ENCODE measurements at regions of chr22 and their contacts with region 1.

Region 1: DNA sequence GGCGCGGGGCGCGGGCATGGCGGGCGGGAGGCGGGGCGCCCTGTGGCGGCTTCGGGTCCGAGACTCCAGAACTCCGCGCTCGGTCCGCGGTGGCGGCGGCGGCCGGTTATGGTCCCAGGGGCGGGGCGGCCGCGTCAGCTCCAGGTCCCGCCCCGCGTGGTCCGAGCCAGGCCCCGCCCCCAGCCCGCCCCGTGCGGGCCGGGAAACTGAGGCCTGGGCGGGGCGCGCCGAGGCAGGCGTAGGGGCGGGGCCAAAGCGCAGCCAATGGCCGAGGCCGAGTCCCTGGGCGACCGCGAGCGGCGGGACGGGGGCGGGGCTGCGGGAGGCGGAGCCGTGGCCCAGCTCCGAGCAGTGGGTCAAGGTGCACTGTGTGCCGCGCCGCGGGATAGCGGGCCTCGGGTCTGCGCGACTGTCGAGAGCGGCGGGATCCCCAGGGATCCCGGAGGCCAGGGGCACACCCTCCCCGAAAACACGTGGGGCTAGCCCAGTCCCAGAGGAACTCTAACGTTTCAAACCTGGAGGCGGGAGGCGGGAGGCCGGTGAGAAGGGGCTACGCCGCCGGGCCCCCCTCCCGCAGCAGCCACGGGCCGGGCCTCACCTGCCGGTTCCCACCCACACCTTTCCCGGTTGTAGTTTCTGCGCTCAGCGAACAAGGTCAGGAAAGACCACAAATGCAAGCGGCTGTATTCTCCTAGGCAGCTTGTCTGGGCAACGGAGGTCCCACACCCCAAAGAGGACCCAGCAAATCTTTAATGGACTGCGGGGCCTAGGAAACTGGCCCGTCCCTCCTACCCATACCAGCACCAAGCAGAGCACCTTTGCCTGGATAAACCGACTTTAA is at the start of gene SLC25A1:
- DNase-seq: peak; percentile 97
- H3K4me3 Mint-ChIP-seq: peak within 1 kb of the TSS; percentile 83
- H3K27ac Mint-ChIP-seq: peak within 1 kb of the TSS; percentile 70
- H3K4me1 Mint-ChIP-seq: peaks cover 23% of the 10 kb centered on the region
- H3K27me3 Mint-ChIP-seq: no peaks in the 10 kb centered on the region
- total RNA-seq, gene SLC25A1: 39.4 and 41.2 TPM in 2 replicates

Region 2: GRCh38 chr22:19143967-19144400 is 34.9 kb before region 1 on chr22:
- intact Hi-C with region 1: loop called (anchors 1 kb)
- DNase-seq: peak; percentile 85
- H3K4me3 Mint-ChIP-seq: peak overlapping the region; percentile 96
- H3K27ac Mint-ChIP-seq: peak overlapping the region; percentile 94
- H3K4me1 Mint-ChIP-seq: peaks cover 13% of the 10 kb centered on the region
- H3K27me3 Mint-ChIP-seq: peaks cover 21% of the 10 kb centered on the region

Region 3: GRCh38 chr22:19291580-19292457 is 112.9 kb after region 1 on chr22 and contains the start of gene CLTCL1:
- intact Hi-C with region 1: loop called (anchors 1 kb)
- DNase-seq: peak; percentile 92
- H3K4me3 Mint-ChIP-seq: peak within 1 kb of the TSS; percentile 92
- H3K27ac Mint-ChIP-seq: peak within 1 kb of the TSS; percentile 87
- H3K4me1 Mint-ChIP-seq: peaks cover 18% of the 10 kb centered on the region
- H3K27me3 Mint-ChIP-seq: peaks cover 47% of the 10 kb centered on the region
- total RNA-seq, gene CLTCL1: 0.43 and 1.3 TPM in 2 replicates

Region 4: GRCh38 chr22:19479357-19480172 is 300.7 kb after region 1 on chr22 and contains the start of gene CDC45:
- intact Hi-C with region 1: loop called (anchors 1 kb)
- DNase-seq: peak; percentile 98
- H3K4me3 Mint-ChIP-seq: peak within 1 kb of the TSS; percentile 100
- H3K27ac Mint-ChIP-seq: peak within 1 kb of the TSS; percentile 98
- H3K4me1 Mint-ChIP-seq: peaks cover 37% of the 10 kb centered on the region
- H3K27me3 Mint-ChIP-seq: no peaks in the 10 kb centered on the region
- total RNA-seq, gene CDC45: 121 and 123 TPM in 2 replicates